Gastrocnemius medialis (tissue), 4 donors: ENCODE measurements at regions of chr3 and their contacts with region 1.

Region 1: GRCh38 chr3:169744366-169745054 is 20.4 kb downstream of the TERC start:
- DNase-seq: no peak
- ATAC-seq: peak in 1 of 2 donors; percentile 56
- H3K4me3 ChIP-seq: no peak overlapping the region
- H3K27ac ChIP-seq: no peak overlapping the region
- H3K4me1 ChIP-seq: no peaks in the 10 kb centered on the region
- H3K27me3 ChIP-seq: peaks cover 0 to 6% (median 0%) of the 10 kb centered on the region in 3 donors
- CTCF ChIP-seq: peak in 3 of 5 experiments; percentile 26 to 64 (median 50)
- POLR2A ChIP-seq: no peak

Region 2: GRCh38 chr3:168865022-168865551 is 879.4 kb before region 1 on chr3:
- in situ Hi-C with region 1: loop called in 1 of 4 experiments (anchors 25 kb)
- intact Hi-C with region 1: no loop called
- DNase-seq: no peak
- ATAC-seq: no peak
- H3K4me3 ChIP-seq: peak overlapping the region in 2 of 4 donors; percentile 3 to 22
- H3K27ac ChIP-seq: no peak overlapping the region
- H3K4me1 ChIP-seq: no peaks in the 10 kb centered on the region
- H3K27me3 ChIP-seq: no peaks in the 10 kb centered on the region
- CTCF ChIP-seq: peak; percentile 12 to 58 (median 34)
- POLR2A ChIP-seq: no peak

Region 3: GRCh38 chr3:169041677-169042171 is 702.8 kb before region 1 on chr3:
- in situ Hi-C with region 1: no loop called
- intact Hi-C with region 1: loop called (anchors 10 kb)
- DNase-seq: no peak
- ATAC-seq: peak; percentile 58 to 60
- H3K4me3 ChIP-seq: no peak overlapping the region
- H3K27ac ChIP-seq: peak overlapping the region in 2 of 4 donors; percentile 11 to 17
- H3K4me1 ChIP-seq: no peaks in the 10 kb centered on the region
- H3K27me3 ChIP-seq: no peaks in the 10 kb centered on the region
- CTCF ChIP-seq: peak in 3 of 5 experiments; percentile 24 to 41 (median 34)
- POLR2A ChIP-seq: no peak